ENCODE measurements at regions of chr15 and their contacts with region 1.

Region 1: GRCh38 chr15:23503576-23503975 is 56.5 kb upstream of the GOLGA6L2 start:
- DNase-seq: no peak
- H3K4me3 ChIP-seq: no peak overlapping the region
- CTCF ChIP-seq: no peak
- POLR2A ChIP-seq: no peak

Region 2: GRCh38 chr15:23642413-23643044 is 139.0 kb after region 1 on chr15:
- intact Hi-C with region 1: loop called (anchors 10 kb)
- DNase-seq: peak in 1 of 2 donors; percentile 17
- H3K4me3 ChIP-seq: no peak overlapping the region
- CTCF ChIP-seq: peak in 1 of 3 donors; percentile 37
- POLR2A ChIP-seq: no peak

Region 3: DNA sequence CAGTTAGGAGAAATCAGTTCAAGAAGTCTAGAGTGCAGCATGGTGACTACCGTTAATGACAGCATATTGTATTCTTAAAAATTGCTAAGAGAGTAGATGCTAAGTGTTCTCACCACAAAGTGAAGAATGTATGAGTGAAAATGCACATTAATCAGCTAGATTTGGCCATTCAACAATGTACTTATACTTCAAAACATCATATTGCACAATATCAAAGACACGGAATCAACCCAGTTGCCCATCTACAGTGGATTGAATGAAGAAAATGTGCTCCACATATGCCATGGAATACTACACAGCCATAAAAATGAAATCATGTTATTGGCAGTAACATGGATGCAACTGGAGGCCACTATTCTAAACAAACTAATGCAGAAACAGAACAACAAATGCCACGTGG is 303.4 kb after region 1 on chr15:
- intact Hi-C with region 1: no loop called
- DNase-seq: no peak
- H3K4me3 ChIP-seq: no peak overlapping the region
- CTCF ChIP-seq: no peak
- POLR2A ChIP-seq: no peak